Heart left ventricle (tissue), 16 donors: ENCODE measurements at regions of chr1 and their contacts with region 1.

Region 1: GRCh38 chr1:20093940-20094391 is 24.0 kb downstream of the PLA2G5 start:
- DNase-seq: peak in 4 of 5 donors; percentile 39 to 85 (median 70)
- ATAC-seq: peak; percentile 74 to 91 (median 80)
- H3K4me3 ChIP-seq: no peak overlapping the region
- H3K27ac ChIP-seq: peak overlapping the region; percentile 18 to 85 (median 63)
- H3K4me1 ChIP-seq: peaks cover 0 to 16% (median 0%) of the 10 kb centered on the region in 12 donors
- H3K27me3 ChIP-seq: no peaks in the 10 kb centered on the region
- CTCF ChIP-seq: no peak
- POLR2A ChIP-seq: no peak

Region 2: GRCh38 chr1:19981507-19982312 is 112.3 kb before region 1 on chr1:
- intact Hi-C with region 1: loop called in 3 of 10 experiments (anchors 5 to 10 kb)
- DNase-seq: no peak
- ATAC-seq: peak in 3 of 4 donors; percentile 23 to 65 (median 58)
- H3K4me3 ChIP-seq: no peak overlapping the region
- H3K27ac ChIP-seq: peak overlapping the region in 7 of 12 donors; percentile 22 to 61 (median 48)
- H3K4me1 ChIP-seq: peaks cover 0 to 22% (median 0%) of the 10 kb centered on the region in 12 donors
- H3K27me3 ChIP-seq: no peaks in the 10 kb centered on the region
- CTCF ChIP-seq: no peak
- POLR2A ChIP-seq: no peak